Lower leg skin (tissue), 4 donors: ENCODE measurements at regions of chr3 and their contacts with region 1.

Region 1: DNA sequence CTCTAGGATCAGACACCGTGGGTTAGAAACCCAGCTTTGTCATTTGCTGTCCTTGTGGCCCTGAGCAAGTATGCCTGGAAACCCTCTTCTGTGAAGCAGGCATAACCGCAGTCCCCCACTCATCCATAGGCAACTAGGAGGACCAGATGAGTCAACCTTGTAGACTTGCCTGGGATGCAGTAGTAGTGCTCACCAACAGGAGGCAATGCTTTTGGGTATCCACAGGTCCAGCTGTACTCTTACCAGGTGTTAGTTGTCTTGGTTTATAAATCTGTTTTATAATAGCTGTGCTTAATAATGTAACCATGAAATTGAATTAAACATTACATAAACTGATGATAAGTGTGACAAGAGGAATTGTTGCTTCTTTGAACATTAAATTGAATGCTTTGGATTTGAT is 389.3 kb downstream of the IL20RB start:
- DNase-seq: no peak
- H3K4me3 ChIP-seq: no peak overlapping the region
- CTCF ChIP-seq: no peak
- POLR2A ChIP-seq: no peak

Region 2: DNA sequence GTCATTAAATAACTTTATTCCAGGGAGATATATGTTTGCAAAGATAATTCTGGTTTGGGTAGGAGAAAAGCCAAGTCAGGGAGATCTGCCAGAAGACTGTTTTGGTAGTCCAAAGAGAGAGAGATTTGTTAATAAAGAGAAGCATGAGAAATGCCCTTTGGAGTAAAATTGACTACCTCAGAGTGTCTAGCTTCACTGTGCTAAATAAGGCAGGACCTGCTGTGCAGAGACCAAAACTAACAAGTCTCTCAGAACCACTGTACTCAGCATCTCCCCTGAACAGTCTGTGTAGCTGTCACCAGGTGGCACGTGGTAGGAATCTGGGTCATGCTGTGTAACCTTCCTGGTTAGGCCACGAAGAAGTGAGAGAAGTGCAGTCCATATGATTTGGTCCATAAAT is 559.8 kb before region 1 on chr3:
- intact Hi-C with region 1: no loop called
- DNase-seq: no peak
- H3K4me3 ChIP-seq: no peak overlapping the region
- CTCF ChIP-seq: no peak
- POLR2A ChIP-seq: no peak

Region 3: GRCh38 chr3:137409584-137409983 is 62.5 kb after region 1 on chr3:
- intact Hi-C with region 1: loop called (anchors 10 kb)
- DNase-seq: no peak
- H3K4me3 ChIP-seq: no peak overlapping the region
- CTCF ChIP-seq: no peak
- POLR2A ChIP-seq: no peak